Cardiac septum (tissue), 1 donor: ENCODE measurements at regions of chrX and their contacts with region 1.

Region 1: DNA sequence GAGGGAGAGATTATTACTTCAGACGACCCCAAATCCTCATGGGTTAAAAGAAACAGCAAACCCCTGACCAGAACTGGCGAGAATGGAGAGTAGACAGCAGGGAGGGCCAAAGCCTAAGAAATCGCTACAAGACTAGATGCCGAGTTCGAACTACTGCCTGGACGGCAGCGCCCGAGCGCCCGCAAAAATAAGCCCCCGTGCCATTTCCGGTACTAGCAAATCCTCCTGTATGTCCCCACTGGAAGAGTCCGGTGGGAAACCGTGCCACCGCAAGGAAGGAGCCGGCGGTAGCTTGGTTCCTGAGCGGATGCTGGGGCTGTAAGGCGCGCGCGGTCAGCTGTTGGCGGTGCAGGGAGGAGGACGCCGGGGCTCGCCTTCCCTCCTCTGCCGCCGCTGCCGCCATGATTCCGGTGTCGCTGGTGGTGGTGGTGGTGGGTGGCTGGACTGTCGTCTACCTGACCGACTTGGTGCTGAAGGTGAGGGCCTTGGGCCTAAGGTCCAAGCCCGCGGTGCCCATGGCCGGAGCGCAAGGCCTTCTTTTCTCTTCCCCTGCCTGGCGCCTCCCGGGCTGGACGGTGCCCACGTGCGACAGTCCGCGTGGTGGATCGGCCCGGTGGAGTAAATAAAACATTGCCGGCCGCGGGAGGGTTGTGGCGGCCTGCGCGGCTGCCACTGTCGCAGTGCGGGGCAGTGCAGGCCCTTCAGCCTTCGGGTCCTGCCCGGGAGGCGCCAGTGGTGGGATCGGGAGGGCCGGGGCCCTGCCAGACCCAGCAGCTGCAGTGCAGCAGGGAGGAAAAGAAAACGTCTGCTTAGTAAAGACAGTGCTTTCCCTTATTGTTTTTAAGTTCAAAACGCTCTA is at the start of gene MBTPS2:
- DNase-seq: peak; percentile 89
- total RNA-seq, gene MBTPS2: 11.2 TPM

Region 2: DNA sequence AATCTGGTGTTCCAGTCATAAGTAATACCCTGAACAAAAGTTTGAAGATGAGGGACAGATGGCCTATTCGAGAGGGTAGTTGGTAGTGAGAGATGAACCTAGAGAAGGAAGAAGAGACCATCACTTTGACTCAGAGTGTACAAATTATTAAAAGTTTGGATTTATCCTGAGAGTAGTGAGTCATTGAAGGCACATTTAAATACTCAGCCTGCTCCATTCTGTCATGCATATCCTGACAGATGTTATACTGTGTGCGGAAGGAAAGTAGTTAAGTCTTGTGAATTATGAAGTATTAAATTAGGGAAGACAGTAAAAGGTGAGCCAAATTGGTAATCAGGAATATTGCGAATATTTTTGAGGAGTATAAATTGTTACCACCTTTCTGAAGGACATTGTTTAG is 274.5 kb before region 1 on chrX:
- intact Hi-C with region 1: no loop called
- DNase-seq: no peak

Region 3: DNA sequence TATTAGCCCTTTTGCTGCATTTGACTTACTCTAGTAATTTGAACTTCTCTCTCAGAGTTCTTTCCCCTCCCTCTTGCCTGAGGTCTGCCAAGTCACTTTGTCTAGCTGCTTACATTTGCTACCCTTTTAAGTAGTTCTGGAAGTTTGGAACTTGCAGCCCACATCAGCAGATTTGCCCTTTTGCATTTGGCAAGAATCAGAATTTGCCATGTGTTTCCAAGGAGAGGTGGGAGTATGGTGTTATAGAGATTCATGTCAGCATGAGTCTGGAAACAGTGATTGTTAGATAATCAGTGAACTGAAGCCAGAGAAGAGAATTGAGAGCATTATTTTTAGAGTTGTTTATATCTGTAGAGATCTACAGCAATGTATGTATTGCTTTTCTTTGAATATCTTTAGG is 233.6 kb before region 1 on chrX:
- intact Hi-C with region 1: no loop called
- DNase-seq: no peak

Region 4: GRCh38 chrX:21691512-21692018 is 148.0 kb before region 1 on chrX:
- intact Hi-C with region 1: no loop called
- DNase-seq: no peak

Region 5: DNA sequence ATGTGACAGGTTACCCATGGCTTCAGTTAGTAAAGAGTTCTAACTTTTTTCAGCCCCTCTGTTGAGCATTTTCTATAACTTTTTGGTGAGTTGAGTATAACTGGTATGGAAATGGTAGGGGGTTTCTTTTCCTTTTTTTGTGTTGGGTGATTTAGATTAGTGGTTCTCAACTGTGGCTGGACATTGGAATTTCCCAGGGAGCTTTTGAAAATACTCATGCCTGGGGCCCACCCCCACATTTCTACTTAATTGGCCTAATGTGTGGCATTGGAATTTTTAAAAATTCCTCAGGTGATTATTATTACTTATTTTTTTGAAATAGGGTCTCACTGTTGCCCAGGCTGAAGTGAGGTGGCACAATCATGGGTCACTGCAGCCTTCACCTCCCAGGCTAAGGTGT is 122.8 kb after region 1 on chrX:
- intact Hi-C with region 1: no loop called
- DNase-seq: no peak

Region 6: GRCh38 chrX:21972721-21973120 is 133.2 kb after region 1 on chrX:
- intact Hi-C with region 1: loop called (anchors 10 kb)
- DNase-seq: no peak